PC-9 (cell line): ENCODE measurements at regions of chr9 and their contacts with region 1.

Region 1: DNA sequence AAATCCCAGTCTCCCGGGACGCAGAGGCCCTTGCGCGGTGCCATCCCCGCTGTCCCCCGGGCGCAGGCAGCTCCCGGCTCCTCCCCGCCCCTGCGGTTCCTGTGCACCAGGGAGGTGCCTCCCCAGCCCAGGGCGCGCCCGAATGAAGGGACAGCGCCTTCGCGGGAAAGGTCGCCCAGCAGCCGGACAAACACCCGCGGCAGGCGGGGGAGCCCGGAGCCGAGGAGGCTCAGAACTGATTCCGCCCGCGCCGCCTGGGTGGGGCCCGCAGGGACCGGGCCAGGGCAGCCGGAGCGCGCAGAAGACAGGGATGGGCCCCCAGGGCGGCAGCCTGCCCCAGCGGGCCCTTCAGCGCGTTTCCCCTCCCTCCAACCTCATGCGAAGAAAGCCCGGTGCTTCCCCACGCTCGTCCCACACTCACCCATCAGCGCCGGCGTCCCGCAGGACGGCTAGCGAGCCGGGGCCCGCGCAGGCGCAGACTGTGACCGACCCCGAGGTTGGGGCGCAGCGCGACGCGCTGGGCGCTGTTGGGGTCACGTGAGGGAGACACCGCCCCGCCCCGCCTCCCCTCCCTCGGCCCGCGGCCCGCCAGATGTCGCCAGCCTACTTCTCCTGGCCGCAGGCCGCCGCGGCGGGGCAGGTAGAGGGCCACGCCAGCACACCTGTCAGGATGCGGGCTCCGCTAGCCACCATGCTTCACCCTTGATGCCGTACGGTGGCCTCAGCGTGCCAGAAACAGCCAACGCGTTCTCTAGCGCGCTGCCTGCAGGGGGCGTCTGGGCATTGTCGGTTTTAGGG is at the start of gene SLC25A51:
- DNase-seq: peak; percentile 74 to 90
- H3K4me3 ChIP-seq: peak within 1 kb of the TSS; percentile 76
- H3K27ac ChIP-seq: peak within 1 kb of the TSS; percentile 42
- H3K4me1 ChIP-seq: peaks cover 18% of the 10 kb centered on the region
- H3K27me3 ChIP-seq: no peaks in the 10 kb centered on the region
- CTCF ChIP-seq: peak; percentile 76; the same call in 1 of the 2 replicates
- total RNA-seq, gene SLC25A51: 12.7 and 14.9 TPM in 2 replicates

Region 2: GRCh38 chr9:37485389-37486219 is 418.2 kb before region 1 on chr9 and contains the start of gene POLR1E:
- CTCF ChIA-PET with region 1: interaction called, 3 read pairs
- POLR2A ChIA-PET with region 1: no interaction called
- intact Hi-C with region 1: loop called (anchors 10 kb)
- DNase-seq: peak; percentile 87 to 90
- H3K4me3 ChIP-seq: peak within 1 kb of the TSS; percentile 84
- H3K27ac ChIP-seq: no peak within 1 kb of the TSS
- H3K4me1 ChIP-seq: peaks cover 13% of the 10 kb centered on the region
- H3K27me3 ChIP-seq: no peaks in the 10 kb centered on the region
- CTCF ChIP-seq: no peak
- total RNA-seq, gene POLR1E: 19.7 and 21.8 TPM in 2 replicates

Region 3: GRCh38 chr9:37746848-37747753 is 156.7 kb before region 1 on chr9:
- CTCF ChIA-PET with region 1: no interaction called
- POLR2A ChIA-PET with region 1: no interaction called
- intact Hi-C with region 1: loop called (anchors 5 kb)
- DNase-seq: peak; percentile 41 to 44
- H3K4me3 ChIP-seq: no peak overlapping the region
- H3K27ac ChIP-seq: no peak overlapping the region
- H3K4me1 ChIP-seq: no peaks in the 10 kb centered on the region
- H3K27me3 ChIP-seq: no peaks in the 10 kb centered on the region
- CTCF ChIP-seq: peak; percentile 79

Region 4: DNA sequence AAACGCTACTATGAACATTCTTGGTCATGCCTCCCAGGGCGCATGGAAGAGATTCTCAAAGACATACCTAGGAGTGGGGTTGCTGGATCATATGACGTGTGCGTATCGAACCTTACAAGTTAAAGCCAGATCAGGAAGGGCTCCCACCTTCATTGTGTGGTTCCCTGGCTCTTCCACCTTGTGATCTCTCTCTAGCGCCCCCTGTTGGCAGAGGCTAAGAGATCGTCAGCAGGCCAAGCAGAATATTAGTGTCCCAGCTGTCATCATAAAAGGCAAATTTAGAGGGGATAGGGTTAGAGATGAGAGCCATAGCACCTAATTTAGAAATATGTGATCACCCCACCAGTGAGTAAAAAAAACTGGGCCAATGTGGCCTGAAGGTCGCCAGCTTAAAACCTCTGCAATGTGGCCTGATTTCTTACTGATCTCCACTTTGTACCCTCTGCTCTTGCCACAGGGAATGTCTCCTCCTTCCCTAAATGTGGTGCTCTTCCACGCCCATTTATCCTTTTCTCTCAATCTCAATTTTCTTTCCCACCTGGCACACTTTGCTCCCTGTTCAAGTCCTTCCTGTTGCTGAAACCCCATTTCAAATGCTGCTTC is 256.9 kb after region 1 on chr9:
- CTCF ChIA-PET with region 1: no interaction called
- POLR2A ChIA-PET with region 1: no interaction called
- intact Hi-C with region 1: loop called (anchors 5 kb)
- DNase-seq: peak in 1 of 2 experiments; percentile 37
- H3K4me3 ChIP-seq: no peak overlapping the region
- H3K27ac ChIP-seq: no peak overlapping the region
- H3K4me1 ChIP-seq: no peaks in the 10 kb centered on the region
- H3K27me3 ChIP-seq: no peaks in the 10 kb centered on the region
- CTCF ChIP-seq: peak; percentile 81

Region 5: GRCh38 chr9:38405785-38406184 is 501.9 kb after region 1 on chr9:
- CTCF ChIA-PET with region 1: no interaction called
- POLR2A ChIA-PET with region 1: no interaction called
- intact Hi-C with region 1: loop called (anchors 5 kb)
- DNase-seq: no peak
- H3K4me3 ChIP-seq: no peak overlapping the region
- H3K27ac ChIP-seq: no peak overlapping the region
- H3K4me1 ChIP-seq: no peaks in the 10 kb centered on the region
- H3K27me3 ChIP-seq: no peaks in the 10 kb centered on the region
- CTCF ChIP-seq: no peak